MCF 10A (cell line): ENCODE measurements at regions of chr9 and their contacts with region 1.

Region 1: DNA sequence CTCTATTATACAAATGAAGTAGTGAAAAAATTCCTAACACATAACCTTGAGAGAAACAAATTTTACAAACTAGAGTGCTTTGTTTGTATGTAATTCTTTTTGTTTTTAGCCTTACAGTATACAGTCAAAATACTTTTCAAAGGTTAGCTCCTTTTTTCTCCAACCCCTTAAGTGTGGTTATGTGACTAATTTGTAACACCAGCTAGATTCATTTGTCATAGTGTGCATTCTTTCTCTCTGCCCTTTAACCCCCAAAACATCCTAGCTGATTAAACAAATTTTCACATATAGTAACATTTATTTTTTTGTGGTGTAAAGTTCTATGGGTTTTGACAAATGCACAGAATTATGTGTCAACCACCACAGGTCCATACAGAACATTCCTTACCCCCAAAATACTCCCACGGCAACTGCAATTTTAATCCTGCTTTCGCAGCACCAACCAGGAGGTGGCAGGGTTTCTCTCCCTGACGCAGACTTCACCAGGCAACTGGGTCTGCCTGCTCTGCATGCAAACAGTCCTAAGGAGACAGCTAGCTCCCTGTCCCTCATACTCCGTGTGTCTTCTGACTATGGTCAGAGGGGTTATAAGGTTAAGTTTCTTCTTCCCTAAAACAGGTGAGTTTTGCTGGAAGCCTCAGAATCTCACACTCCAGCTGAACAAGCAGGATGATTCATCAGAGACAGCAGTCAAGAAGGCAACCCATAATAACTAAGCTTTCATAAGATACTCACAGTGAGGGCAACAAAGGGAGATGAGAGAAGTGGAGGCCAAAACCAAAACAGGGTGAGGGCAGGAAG is 44.5 kb upstream of the NR5A1 start:
- DNase-seq: peak; percentile 59
- H3K4me3 Mint-ChIP-seq: no peak overlapping the region
- H3K27ac Mint-ChIP-seq: no peak overlapping the region
- H3K4me1 Mint-ChIP-seq: no peaks in the 10 kb centered on the region
- H3K27me3 Mint-ChIP-seq: no peaks in the 10 kb centered on the region
- CTCF ChIP-seq: peak; percentile 78

Region 2: GRCh38 chr9:124202447-124202971 is 349.2 kb before region 1 on chr9:
- CTCF ChIA-PET with region 1: no interaction called
- POLR2A ChIA-PET with region 1: no interaction called
- intact Hi-C with region 1: no loop called
- DNase-seq: no peak
- H3K4me3 Mint-ChIP-seq: no peak overlapping the region
- H3K27ac Mint-ChIP-seq: no peak overlapping the region
- H3K4me1 Mint-ChIP-seq: no peaks in the 10 kb centered on the region
- H3K27me3 Mint-ChIP-seq: peaks cover 44% of the 10 kb centered on the region
- CTCF ChIP-seq: no peak

Region 3: GRCh38 chr9:124452836-124453585 is 98.7 kb before region 1 on chr9:
- CTCF ChIA-PET with region 1: no interaction called
- POLR2A ChIA-PET with region 1: no interaction called
- intact Hi-C with region 1: no loop called
- DNase-seq: no peak
- H3K4me3 Mint-ChIP-seq: no peak overlapping the region
- H3K27ac Mint-ChIP-seq: no peak overlapping the region
- H3K4me1 Mint-ChIP-seq: no peaks in the 10 kb centered on the region
- H3K27me3 Mint-ChIP-seq: no peaks in the 10 kb centered on the region
- CTCF ChIP-seq: no peak

Region 4: DNA sequence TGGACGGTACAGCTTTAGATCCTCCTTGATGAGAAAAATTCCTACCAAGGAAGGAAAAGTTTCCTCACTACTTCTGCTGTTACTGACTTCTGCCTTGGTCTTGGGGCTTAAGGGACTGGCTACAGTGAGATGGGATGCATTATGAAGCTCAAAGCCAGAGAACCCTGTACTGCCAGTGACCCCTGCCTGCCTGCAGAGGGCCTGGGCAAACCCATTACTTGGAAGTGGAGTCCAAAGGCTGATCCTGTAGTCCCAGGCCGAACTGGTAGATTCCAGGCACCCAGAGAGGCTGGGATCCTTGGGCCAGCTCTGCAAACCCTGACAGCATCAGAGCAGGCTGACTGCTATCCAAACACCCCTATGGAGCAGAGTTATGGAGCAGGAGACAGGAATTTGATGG is 18.8 kb before region 1 on chr9:
- CTCF ChIA-PET with region 1: interaction called, 71 read pairs
- POLR2A ChIA-PET with region 1: interaction called, 3 read pairs
- intact Hi-C with region 1: no loop called
- DNase-seq: no peak
- H3K4me3 Mint-ChIP-seq: no peak overlapping the region
- H3K27ac Mint-ChIP-seq: no peak overlapping the region
- H3K4me1 Mint-ChIP-seq: no peaks in the 10 kb centered on the region
- H3K27me3 Mint-ChIP-seq: no peaks in the 10 kb centered on the region
- CTCF ChIP-seq: no peak

Region 5: GRCh38 chr9:124567362-124567761 is 15.7 kb after region 1 on chr9:
- CTCF ChIA-PET with region 1: interaction called, 40 read pairs
- POLR2A ChIA-PET with region 1: interaction called, 4 read pairs
- intact Hi-C with region 1: no loop called
- DNase-seq: no peak
- H3K4me3 Mint-ChIP-seq: no peak overlapping the region
- H3K27ac Mint-ChIP-seq: no peak overlapping the region
- H3K4me1 Mint-ChIP-seq: peaks cover 5% of the 10 kb centered on the region
- H3K27me3 Mint-ChIP-seq: no peaks in the 10 kb centered on the region
- CTCF ChIP-seq: no peak

Region 6: GRCh38 chr9:124594673-124595072 is 43.0 kb after region 1 on chr9:
- CTCF ChIA-PET with region 1: interaction called, 13 read pairs
- POLR2A ChIA-PET with region 1: interaction called, 5 read pairs
- intact Hi-C with region 1: no loop called
- DNase-seq: no peak
- H3K4me3 Mint-ChIP-seq: no peak overlapping the region
- H3K27ac Mint-ChIP-seq: no peak overlapping the region
- H3K4me1 Mint-ChIP-seq: no peaks in the 10 kb centered on the region
- H3K27me3 Mint-ChIP-seq: no peaks in the 10 kb centered on the region
- CTCF ChIP-seq: no peak

Region 7: DNA sequence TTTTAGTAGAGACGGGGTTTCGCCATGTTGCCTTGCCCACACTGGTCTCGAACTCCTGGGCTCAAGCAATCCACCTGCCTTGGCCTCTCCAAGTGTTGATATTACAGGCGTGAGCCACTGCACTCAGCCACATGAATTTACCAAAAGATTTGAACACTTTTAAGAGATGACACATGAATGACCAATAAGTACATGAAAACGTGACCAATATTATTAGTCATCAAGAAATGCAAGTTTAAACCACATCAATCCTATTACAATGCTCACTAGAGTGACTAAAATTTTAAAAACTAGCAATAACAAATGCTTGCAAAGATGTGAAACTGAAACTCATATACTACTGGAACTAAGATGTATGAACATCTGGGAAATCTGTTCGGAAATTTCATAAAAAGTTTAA is 165.1 kb after region 1 on chr9:
- CTCF ChIA-PET with region 1: interaction called, 55 read pairs
- POLR2A ChIA-PET with region 1: interaction called, 4 read pairs
- intact Hi-C with region 1: loop called (anchors 1 kb)
- DNase-seq: peak; percentile 25
- H3K4me3 Mint-ChIP-seq: no peak overlapping the region
- H3K27ac Mint-ChIP-seq: no peak overlapping the region
- H3K4me1 Mint-ChIP-seq: peaks cover 5% of the 10 kb centered on the region
- H3K27me3 Mint-ChIP-seq: no peaks in the 10 kb centered on the region
- CTCF ChIP-seq: no peak

Region 8: GRCh38 chr9:124764774-124765438 is 213.2 kb after region 1 on chr9:
- CTCF ChIA-PET with region 1: interaction called, 22 read pairs
- POLR2A ChIA-PET with region 1: interaction called, 3 read pairs
- intact Hi-C with region 1: loop called (anchors 2 kb)
- DNase-seq: peak; percentile 35
- H3K4me3 Mint-ChIP-seq: no peak overlapping the region
- H3K27ac Mint-ChIP-seq: no peak overlapping the region
- H3K4me1 Mint-ChIP-seq: peaks cover 11% of the 10 kb centered on the region
- H3K27me3 Mint-ChIP-seq: no peaks in the 10 kb centered on the region
- CTCF ChIP-seq: peak; percentile 37